Caco-2 (cell line): ENCODE measurements at regions of chr2 and their contacts with region 1.

Region 1: DNA sequence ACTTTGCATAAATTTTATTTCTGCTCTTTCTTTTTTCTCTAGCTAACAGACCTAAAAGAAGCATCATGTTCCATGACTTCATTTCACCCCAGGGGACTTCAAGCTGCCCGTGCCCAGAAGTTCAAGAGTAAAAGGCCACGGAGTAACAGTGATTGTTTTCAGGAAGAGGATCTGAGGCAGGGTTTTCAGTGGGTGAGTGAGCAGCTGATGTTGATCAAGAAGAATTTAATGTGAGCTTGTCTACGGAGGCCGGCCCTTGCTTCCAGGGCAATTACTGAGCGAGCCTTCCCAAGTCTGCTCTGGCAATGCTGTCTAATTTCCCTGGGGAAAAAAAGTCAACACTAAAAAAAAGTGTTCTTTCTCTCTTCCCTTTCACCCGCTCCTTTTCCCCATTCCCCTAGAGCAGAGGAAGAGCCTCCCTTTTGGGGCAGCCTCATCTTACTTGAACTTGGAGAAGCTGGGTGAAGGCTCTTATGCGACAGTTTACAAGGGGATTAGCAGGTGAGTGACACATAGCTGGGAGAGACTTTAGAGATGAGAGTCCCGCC is 1.2 kb downstream of the CDK15 start:
- DNase-seq: no peak
- H3K4me3 ChIP-seq: no peak overlapping the region
- H3K4me3 Mint-ChIP-seq: no peak overlapping the region
- H3K27ac Mint-ChIP-seq: no peak overlapping the region
- H3K4me1 ChIP-seq: peaks cover 23% of the 10 kb centered on the region
- H3K4me1 Mint-ChIP-seq: peaks cover 35% of the 10 kb centered on the region
- H3K27me3 ChIP-seq: no peaks in the 10 kb centered on the region
- H3K27me3 Mint-ChIP-seq: no peaks in the 10 kb centered on the region
- CTCF ChIP-seq: no peak

Region 2: DNA sequence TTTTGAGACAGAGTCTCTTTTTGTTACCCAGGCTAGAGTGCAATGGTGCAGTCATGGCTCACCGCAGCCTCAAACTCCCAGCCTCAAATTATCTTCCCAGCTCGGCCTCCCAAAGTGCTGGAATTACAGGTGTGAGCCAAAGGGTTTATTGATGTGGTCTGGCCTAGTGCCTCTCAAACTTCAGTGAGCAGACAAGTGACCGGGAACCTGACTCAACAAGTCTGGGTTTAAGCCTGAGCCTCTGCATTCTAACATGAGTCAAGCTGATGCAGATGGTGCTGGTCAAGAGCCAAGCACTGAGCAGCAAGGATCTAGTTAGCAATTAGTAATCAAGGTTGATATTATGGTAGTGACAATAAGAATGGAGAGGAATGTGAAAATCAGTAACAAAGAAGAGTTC is 20.1 kb after region 1 on chr2:
- CTCF ChIA-PET with region 1: no interaction called
- POLR2A ChIA-PET with region 1: no interaction called
- intact Hi-C with region 1: no loop called
- DNase-seq: no peak
- H3K4me3 ChIP-seq: no peak overlapping the region
- H3K4me3 Mint-ChIP-seq: no peak overlapping the region
- H3K27ac Mint-ChIP-seq: no peak overlapping the region
- H3K4me1 ChIP-seq: no peaks in the 10 kb centered on the region
- H3K4me1 Mint-ChIP-seq: no peaks in the 10 kb centered on the region
- H3K27me3 ChIP-seq: no peaks in the 10 kb centered on the region
- H3K27me3 Mint-ChIP-seq: no peaks in the 10 kb centered on the region
- CTCF ChIP-seq: no peak

Region 3: DNA sequence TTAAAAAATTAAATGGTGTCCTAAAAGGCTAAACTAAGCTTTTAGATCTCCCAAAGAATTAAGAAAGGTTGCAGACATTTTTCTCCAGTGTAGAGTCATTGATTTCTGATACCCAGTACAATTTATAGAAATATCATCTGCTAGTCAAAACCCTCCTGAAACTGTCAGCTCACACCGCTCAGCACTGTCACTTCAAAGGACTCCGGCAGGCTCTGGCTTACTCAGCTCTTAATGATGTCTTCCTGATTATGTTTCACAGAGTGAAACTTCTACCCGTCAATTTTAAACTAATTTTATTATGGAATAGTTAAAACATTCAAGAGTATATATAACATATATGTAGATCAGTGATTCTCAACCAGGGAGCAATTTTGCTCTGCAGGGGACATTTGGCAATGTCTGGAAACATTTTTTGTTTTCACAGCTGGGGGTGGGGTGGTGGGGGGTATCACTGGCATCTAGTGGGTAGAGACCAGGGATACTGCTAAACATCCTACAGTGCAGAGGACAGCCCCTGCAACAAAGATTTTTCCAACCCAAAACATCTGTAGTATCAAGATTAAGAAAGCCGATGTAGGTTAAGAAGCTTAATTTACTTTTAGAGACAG is 30.4 kb after region 1 on chr2:
- CTCF ChIA-PET with region 1: interaction called, 11 read pairs
- POLR2A ChIA-PET with region 1: no interaction called
- intact Hi-C with region 1: no loop called
- DNase-seq: no peak
- H3K4me3 ChIP-seq: no peak overlapping the region
- H3K4me3 Mint-ChIP-seq: no peak overlapping the region
- H3K27ac Mint-ChIP-seq: no peak overlapping the region
- H3K4me1 ChIP-seq: no peaks in the 10 kb centered on the region
- H3K4me1 Mint-ChIP-seq: no peaks in the 10 kb centered on the region
- H3K27me3 ChIP-seq: no peaks in the 10 kb centered on the region
- H3K27me3 Mint-ChIP-seq: peaks cover 2% of the 10 kb centered on the region
- CTCF ChIP-seq: no peak